Spleen (tissue), 13 donors: ENCODE measurements at regions of chr3 and their contacts with region 1.

Region 1: DNA sequence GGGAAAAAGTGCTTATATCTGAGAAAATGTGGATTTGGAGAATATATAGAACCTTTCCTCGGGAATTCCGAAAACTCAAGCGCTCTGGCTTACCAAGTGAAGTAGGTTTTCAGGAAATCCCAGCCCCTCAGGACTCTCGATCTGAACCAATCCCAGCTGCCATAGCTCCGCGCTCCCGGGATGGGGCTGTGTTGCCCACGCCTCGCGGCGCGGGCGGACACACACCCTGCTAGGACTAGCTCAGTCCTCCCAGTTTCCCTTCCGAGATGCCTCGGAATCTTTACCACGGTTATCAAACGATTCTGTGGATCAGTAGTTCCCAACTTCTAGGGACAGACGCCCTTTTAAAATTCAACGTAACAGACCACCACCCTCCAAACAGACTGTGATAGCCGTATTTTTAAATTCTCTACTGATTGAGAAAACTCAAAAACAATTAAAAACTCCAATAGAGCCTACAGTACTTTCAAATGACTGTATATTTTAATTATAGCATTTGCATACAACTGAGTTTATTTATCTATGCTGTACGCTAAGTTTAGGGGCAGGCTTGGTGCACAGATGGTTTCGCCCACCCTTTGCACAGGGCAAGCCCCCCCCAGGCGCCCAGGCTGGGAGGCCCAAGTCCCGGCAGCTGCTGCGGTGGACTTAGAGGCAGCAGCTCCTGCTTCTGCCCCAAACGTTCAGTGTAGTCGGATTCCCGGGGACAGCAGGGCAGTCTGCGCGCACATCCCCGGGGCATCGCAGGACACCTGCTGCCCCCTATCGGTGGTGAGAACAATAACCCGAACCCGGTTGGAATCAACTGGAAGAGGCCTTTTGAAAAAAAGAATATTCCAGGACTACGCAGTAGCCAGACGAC is 52.3 kb downstream of the CCDC54 start:
- DNase-seq: peak; percentile 90
- H3K4me3 ChIP-seq: peak overlapping the region in 7 of 8 donors; percentile 16 to 90 (median 72)
- H3K27ac ChIP-seq: peak overlapping the region; percentile 27 to 96 (median 93)
- H3K4me1 ChIP-seq: peaks cover 14 to 59% (median 33%) of the 10 kb centered on the region in 6 donors
- H3K27me3 ChIP-seq: peaks cover 0 to 17% (median 0%) of the 10 kb centered on the region in 7 donors
- CTCF ChIP-seq: peak; percentile 49 to 88 (median 79)
- POLR2A ChIP-seq: no peak

Region 2: GRCh38 chr3:107524841-107525643 is 95.5 kb after region 1 on chr3:
- intact Hi-C with region 1: loop called (anchors 5 kb)
- DNase-seq: peak; percentile 90
- H3K4me3 ChIP-seq: peak overlapping the region; percentile 73 to 93 (median 82)
- H3K27ac ChIP-seq: peak overlapping the region; percentile 62 to 99 (median 97)
- H3K4me1 ChIP-seq: peaks cover 0 to 61% (median 32%) of the 10 kb centered on the region in 6 donors
- H3K27me3 ChIP-seq: no peaks in the 10 kb centered on the region
- CTCF ChIP-seq: no peak
- POLR2A ChIP-seq: no peak

Region 3: DNA sequence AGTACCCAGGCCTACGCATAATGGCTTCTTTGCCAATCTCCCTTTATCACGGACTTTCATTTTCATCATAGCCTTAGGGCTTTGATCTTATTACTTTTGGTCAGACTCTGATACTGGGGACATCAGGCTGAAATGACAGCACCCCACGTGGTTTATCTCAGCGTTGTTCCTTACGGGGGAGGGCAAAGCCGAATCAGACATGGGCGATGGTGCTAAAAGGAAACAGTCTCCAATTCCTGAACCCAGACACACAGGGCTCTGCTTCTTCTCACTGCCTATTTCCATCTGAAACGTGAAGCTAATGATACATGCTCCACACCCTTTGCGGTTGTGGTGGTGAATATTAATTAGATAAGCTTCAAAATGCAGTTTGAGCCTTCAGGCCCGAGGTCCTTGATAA is 720.6 kb after region 1 on chr3:
- intact Hi-C with region 1: no loop called
- DNase-seq: no peak
- H3K4me3 ChIP-seq: no peak overlapping the region
- H3K27ac ChIP-seq: no peak overlapping the region
- H3K4me1 ChIP-seq: peaks cover 0 to 9% (median 0%) of the 10 kb centered on the region in 6 donors
- H3K27me3 ChIP-seq: no peaks in the 10 kb centered on the region
- CTCF ChIP-seq: no peak
- POLR2A ChIP-seq: no peak

Region 4: DNA sequence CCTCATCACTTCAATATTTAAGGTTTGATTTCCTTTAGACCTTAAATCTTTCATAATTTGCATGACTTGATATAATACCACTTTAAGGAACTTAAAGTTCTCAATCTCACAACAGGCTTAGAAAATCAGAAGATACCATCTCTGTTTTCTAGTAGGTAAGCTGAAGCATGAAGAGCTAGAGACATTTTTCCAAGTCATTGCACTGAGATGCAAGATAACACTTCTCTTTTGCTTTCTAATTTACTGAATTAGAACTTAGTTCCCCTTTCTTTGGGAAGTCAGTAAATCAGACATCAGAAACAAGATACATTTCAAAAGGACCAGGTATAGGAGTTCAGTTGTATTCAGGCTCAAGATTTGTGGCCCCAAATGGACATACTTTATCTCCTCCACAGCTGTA is 1239.7 kb after region 1 on chr3:
- intact Hi-C with region 1: no loop called
- DNase-seq: no peak
- H3K4me3 ChIP-seq: no peak overlapping the region
- H3K27ac ChIP-seq: peak overlapping the region in 1 of 8 donors; percentile 41
- H3K4me1 ChIP-seq: peaks cover 0 to 4% (median 0%) of the 10 kb centered on the region in 6 donors
- H3K27me3 ChIP-seq: no peaks in the 10 kb centered on the region
- CTCF ChIP-seq: no peak
- POLR2A ChIP-seq: no peak